B cell (primary cell): ENCODE measurements at regions of chr10 and their contacts with region 1.

Region 1: GRCh38 chr10:128150045-128150493 is 23.8 kb upstream of the MKI67 start:
- DNase-seq: peak; percentile 85
- ATAC-seq: peak; percentile 84
- H3K4me3 ChIP-seq: peak overlapping the region; percentile 28 to 55 (median 49)
- H3K4me3 Mint-ChIP-seq: peak overlapping the region; percentile 66
- H3K27ac ChIP-seq: no peak overlapping the region
- H3K27ac Mint-ChIP-seq: no peak overlapping the region
- H3K4me1 ChIP-seq: peaks cover 16 to 24% of the 10 kb centered on the region in 2 donors
- H3K4me1 Mint-ChIP-seq: peaks cover 36% of the 10 kb centered on the region
- H3K27me3 ChIP-seq: peaks cover 0 to 14% (median 2%) of the 10 kb centered on the region in 4 experiments
- H3K27me3 Mint-ChIP-seq: peaks cover 28% of the 10 kb centered on the region
- CTCF ChIP-seq: peak; percentile 77

Region 2: GRCh38 chr10:127715782-127716378 is 434.2 kb before region 1 on chr10:
- CTCF ChIA-PET with region 1: interaction called, 11 read pairs
- POLR2A ChIA-PET with region 1: no interaction called
- intact Hi-C with region 1: loop called (anchors 10 kb)
- DNase-seq: peak; percentile 47
- ATAC-seq: no peak
- H3K4me3 ChIP-seq: no peak overlapping the region
- H3K4me3 Mint-ChIP-seq: no peak overlapping the region
- H3K27ac ChIP-seq: no peak overlapping the region
- H3K27ac Mint-ChIP-seq: no peak overlapping the region
- H3K4me1 ChIP-seq: no peaks in the 10 kb centered on the region
- H3K4me1 Mint-ChIP-seq: no peaks in the 10 kb centered on the region
- H3K27me3 ChIP-seq: no peaks in the 10 kb centered on the region
- H3K27me3 Mint-ChIP-seq: peaks cover 15% of the 10 kb centered on the region
- CTCF ChIP-seq: peak; percentile 58

Region 3: DNA sequence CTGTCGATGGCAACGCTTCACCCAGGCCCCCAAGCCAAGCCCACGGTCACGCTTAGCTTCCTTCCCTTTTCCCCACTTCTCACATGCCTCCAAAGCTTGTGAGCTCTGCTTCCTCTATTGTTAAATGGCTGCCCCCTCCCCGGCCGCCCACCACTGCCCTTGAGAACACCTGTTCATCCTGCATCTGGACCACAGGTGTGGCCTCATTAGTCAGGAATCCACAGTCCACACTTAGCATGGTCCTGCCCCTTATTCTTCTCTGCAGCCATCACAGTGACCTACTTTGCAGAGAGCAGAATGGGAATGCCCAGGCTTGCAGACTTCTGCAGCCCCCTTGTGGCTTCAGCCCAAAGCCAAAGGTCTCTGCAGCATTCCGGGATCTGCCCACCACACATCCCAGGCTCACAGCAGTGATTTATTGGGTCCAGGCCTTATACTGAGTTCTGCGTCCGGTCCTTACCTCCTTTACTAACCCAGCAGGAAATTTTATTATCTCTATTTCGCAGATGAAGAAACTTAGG is 176.2 kb before region 1 on chr10:
- CTCF ChIA-PET with region 1: no interaction called
- POLR2A ChIA-PET with region 1: no interaction called
- intact Hi-C with region 1: no loop called
- DNase-seq: no peak
- ATAC-seq: no peak
- H3K4me3 ChIP-seq: no peak overlapping the region
- H3K4me3 Mint-ChIP-seq: no peak overlapping the region
- H3K27ac ChIP-seq: no peak overlapping the region
- H3K27ac Mint-ChIP-seq: no peak overlapping the region
- H3K4me1 ChIP-seq: peaks cover 0 to 5% of the 10 kb centered on the region in 2 donors
- H3K4me1 Mint-ChIP-seq: peaks cover 5% of the 10 kb centered on the region
- H3K27me3 ChIP-seq: peaks cover 0 to 14% (median 0%) of the 10 kb centered on the region in 4 experiments
- H3K27me3 Mint-ChIP-seq: peaks cover 19% of the 10 kb centered on the region
- CTCF ChIP-seq: no peak

Region 4: GRCh38 chr10:128064108-128064969 is 85.7 kb before region 1 on chr10:
- CTCF ChIA-PET with region 1: interaction called, 6 read pairs
- POLR2A ChIA-PET with region 1: interaction called, 3 read pairs
- intact Hi-C with region 1: loop called (anchors 1 kb)
- DNase-seq: peak; percentile 92
- ATAC-seq: peak; percentile 74
- H3K4me3 ChIP-seq: peak overlapping the region; percentile 3 to 48 (median 31)
- H3K4me3 Mint-ChIP-seq: peak overlapping the region; percentile 75
- H3K27ac ChIP-seq: peak overlapping the region; percentile 86 to 89
- H3K27ac Mint-ChIP-seq: peak overlapping the region; percentile 85
- H3K4me1 ChIP-seq: peaks cover 47 to 65% of the 10 kb centered on the region in 2 donors
- H3K4me1 Mint-ChIP-seq: peaks cover 75% of the 10 kb centered on the region
- H3K27me3 ChIP-seq: no peaks in the 10 kb centered on the region
- H3K27me3 Mint-ChIP-seq: no peaks in the 10 kb centered on the region
- CTCF ChIP-seq: no peak

Region 5: GRCh38 chr10:128125944-128126764 is 23.9 kb before region 1 on chr10 and contains the start of gene MKI67:
- CTCF ChIA-PET with region 1: interaction called, 3 read pairs
- POLR2A ChIA-PET with region 1: no interaction called
- intact Hi-C with region 1: loop called (anchors 1 kb)
- DNase-seq: peak; percentile 94
- ATAC-seq: peak; percentile 94
- H3K4me3 ChIP-seq: peak within 1 kb of the TSS; percentile 60 to 96 (median 73)
- H3K4me3 Mint-ChIP-seq: peak within 1 kb of the TSS; percentile 89
- H3K27ac ChIP-seq: peak within 1 kb of the TSS; percentile 72 to 74
- H3K27ac Mint-ChIP-seq: peak within 1 kb of the TSS; percentile 66
- H3K4me1 ChIP-seq: peaks cover 18 to 23% of the 10 kb centered on the region in 2 donors
- H3K4me1 Mint-ChIP-seq: peaks cover 29% of the 10 kb centered on the region
- H3K27me3 ChIP-seq: peaks cover 0 to 23% (median 19%) of the 10 kb centered on the region in 4 experiments
- H3K27me3 Mint-ChIP-seq: peaks cover 27% of the 10 kb centered on the region
- CTCF ChIP-seq: no peak
- total RNA-seq, gene MKI67: 0.47 and 0.58 TPM in 2 replicates

Region 6: GRCh38 chr10:128211953-128212727 is 62.1 kb after region 1 on chr10:
- CTCF ChIA-PET with region 1: interaction called, 6 read pairs
- POLR2A ChIA-PET with region 1: no interaction called
- intact Hi-C with region 1: loop called (anchors 5 kb)
- DNase-seq: peak; percentile 89
- ATAC-seq: peak; percentile 87
- H3K4me3 ChIP-seq: no peak overlapping the region
- H3K4me3 Mint-ChIP-seq: peak overlapping the region; percentile 82
- H3K27ac ChIP-seq: no peak overlapping the region
- H3K27ac Mint-ChIP-seq: peak overlapping the region; percentile 78
- H3K4me1 ChIP-seq: peaks cover 8 to 12% of the 10 kb centered on the region in 2 donors
- H3K4me1 Mint-ChIP-seq: peaks cover 12% of the 10 kb centered on the region
- H3K27me3 ChIP-seq: peaks cover 0 to 13% (median 0%) of the 10 kb centered on the region in 4 experiments
- H3K27me3 Mint-ChIP-seq: peaks cover 23% of the 10 kb centered on the region
- CTCF ChIP-seq: peak; percentile 89